ENCODE measurements at regions of chr11 and their contacts with region 1.

Region 1: GRCh38 chr11:44621140-44621681 is 55.7 kb downstream of the CD82 start:
- DNase-seq: peak; percentile 80 to 84 (median 82)
- ATAC-seq: peak; percentile 80 to 90 (median 88)
- H3K4me3 ChIP-seq: peak overlapping the region in 1 of 3 donors; percentile 13
- H3K27ac ChIP-seq: no peak overlapping the region
- H3K4me1 ChIP-seq: peaks cover 0 to 14% (median 3%) of the 10 kb centered on the region in 4 donors
- H3K27me3 ChIP-seq: no peaks in the 10 kb centered on the region
- CTCF ChIP-seq: peak; percentile 93 to 99 (median 97)
- POLR2A ChIP-seq: no peak

Region 2: DNA sequence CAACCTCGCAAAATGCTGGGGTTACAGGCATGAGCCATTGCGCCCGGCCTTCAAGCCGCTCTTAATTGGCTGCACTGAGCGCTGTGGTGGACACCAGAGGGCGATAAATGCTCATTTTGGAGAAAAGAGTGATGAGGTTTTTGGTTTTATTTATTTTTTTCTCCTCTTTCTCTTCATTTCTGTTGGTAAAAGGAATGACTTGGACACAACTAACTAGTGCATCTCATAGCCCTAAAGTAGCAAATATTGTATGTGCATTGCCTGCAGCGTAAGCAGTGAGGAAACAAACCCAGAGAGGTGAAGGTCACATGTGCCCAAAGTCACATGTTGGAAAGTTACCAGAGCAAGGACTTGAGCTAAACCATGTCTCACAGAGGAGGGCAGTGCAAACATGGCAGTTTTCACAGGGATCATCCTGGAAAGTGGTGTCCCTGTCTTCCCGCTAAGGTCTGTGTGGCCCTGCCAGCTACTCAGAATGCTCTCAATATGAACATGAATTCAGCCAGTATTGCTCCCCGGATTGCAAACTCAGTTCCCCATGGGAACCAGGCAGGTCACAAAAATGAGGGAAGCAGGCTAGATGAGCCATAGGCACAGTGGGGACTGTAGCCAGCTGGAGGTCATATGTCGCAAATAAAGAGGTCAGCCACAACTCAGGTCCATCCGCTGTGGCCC is 64.3 kb before region 1 on chr11:
- intact Hi-C with region 1: loop called (anchors 5 kb)
- DNase-seq: peak; percentile 61 to 71 (median 68)
- ATAC-seq: peak; percentile 88 to 90 (median 88)
- H3K4me3 ChIP-seq: no peak overlapping the region
- H3K27ac ChIP-seq: peak overlapping the region in 2 of 3 donors; percentile 29 to 52
- H3K4me1 ChIP-seq: peaks cover 0 to 12% (median 7%) of the 10 kb centered on the region in 4 donors
- H3K27me3 ChIP-seq: no peaks in the 10 kb centered on the region
- CTCF ChIP-seq: peak; percentile 74 to 93 (median 76)
- POLR2A ChIP-seq: no peak

Region 3: GRCh38 chr11:44775366-44775984 is 154.3 kb after region 1 on chr11:
- intact Hi-C with region 1: loop called (anchors 10 kb)
- DNase-seq: peak; percentile 59 to 72 (median 65)
- ATAC-seq: peak; percentile 89 to 97 (median 94)
- H3K4me3 ChIP-seq: no peak overlapping the region
- H3K27ac ChIP-seq: no peak overlapping the region
- H3K4me1 ChIP-seq: no peaks in the 10 kb centered on the region
- H3K27me3 ChIP-seq: no peaks in the 10 kb centered on the region
- CTCF ChIP-seq: peak; percentile 65 to 72 (median 68)
- POLR2A ChIP-seq: no peak

Region 4: GRCh38 chr11:44911029-44911814 is 290.0 kb after region 1 on chr11:
- intact Hi-C with region 1: loop called (anchors 2 to 10 kb)
- DNase-seq: peak in 2 of 3 donors; percentile 72 to 85
- ATAC-seq: peak; percentile 73 to 81 (median 78)
- H3K4me3 ChIP-seq: peak overlapping the region in 1 of 3 donors; percentile 13
- H3K27ac ChIP-seq: no peak overlapping the region
- H3K4me1 ChIP-seq: peaks cover 0 to 22% (median 0%) of the 10 kb centered on the region in 4 donors
- H3K27me3 ChIP-seq: no peaks in the 10 kb centered on the region
- CTCF ChIP-seq: peak; percentile 72 to 88 (median 86)
- POLR2A ChIP-seq: no peak